Stomach (tissue), 19 donors: ENCODE measurements at regions of chr5 and their contacts with region 1.

Region 1: DNA sequence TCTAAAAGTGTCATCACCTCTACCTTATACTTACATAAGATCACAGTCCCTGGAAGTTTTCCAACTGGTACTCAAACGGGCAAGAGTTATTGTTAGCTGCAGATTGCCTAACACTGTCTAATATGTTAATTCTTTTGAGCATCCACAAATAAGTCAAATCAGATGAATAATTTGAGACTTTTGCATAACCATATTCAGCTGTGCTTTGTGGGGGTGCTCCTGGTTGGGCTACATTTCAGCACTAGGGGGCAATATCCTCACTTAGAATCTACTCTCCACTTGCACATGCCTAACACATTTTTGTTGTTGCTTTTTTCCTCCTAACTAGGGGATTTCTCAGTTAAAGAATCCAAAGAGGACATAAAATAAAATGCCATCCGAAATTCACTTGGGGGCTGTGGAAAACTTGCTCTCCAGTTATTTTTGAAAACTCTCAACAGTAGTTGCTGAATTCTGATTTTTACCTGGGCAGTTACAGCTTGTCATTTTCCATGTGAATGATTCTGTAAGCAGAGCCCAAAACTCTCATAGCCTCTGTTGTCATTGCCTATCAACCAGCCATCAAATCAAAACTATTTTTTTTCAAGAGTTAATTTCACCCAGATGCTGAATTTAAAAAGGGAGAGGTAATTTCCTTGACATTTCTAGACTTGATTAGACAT is 71.5 kb downstream of the TRIM36 start:
- DNase-seq: peak in 1 of 2 donors; percentile 76
- H3K4me3 ChIP-seq: no peak overlapping the region
- H3K27ac ChIP-seq: no peak overlapping the region
- H3K4me1 ChIP-seq: no peaks in the 10 kb centered on the region
- H3K27me3 ChIP-seq: no peaks in the 10 kb centered on the region
- CTCF ChIP-seq: peak in 5 of 7 experiments; percentile 43 to 76 (median 59)
- EP300 ChIP-seq: no peak
- POLR2A ChIP-seq: no peak

Region 2: GRCh38 chr5:114658194-114658593 is 440.0 kb before region 1 on chr5:
- intact Hi-C with region 1: no loop called
- DNase-seq: peak in 1 of 2 donors; percentile 19
- H3K4me3 ChIP-seq: no peak overlapping the region
- H3K27ac ChIP-seq: no peak overlapping the region
- H3K4me1 ChIP-seq: no peaks in the 10 kb centered on the region
- H3K27me3 ChIP-seq: no peaks in the 10 kb centered on the region
- CTCF ChIP-seq: no peak
- EP300 ChIP-seq: no peak
- POLR2A ChIP-seq: no peak

Region 3: GRCh38 chr5:115246361-115246991 is 148.3 kb after region 1 on chr5:
- intact Hi-C with region 1: loop called (anchors 5 kb)
- DNase-seq: peak in 1 of 2 donors; percentile 71
- H3K4me3 ChIP-seq: no peak overlapping the region
- H3K27ac ChIP-seq: no peak overlapping the region
- H3K4me1 ChIP-seq: peaks cover 0 to 45% (median 31%) of the 10 kb centered on the region in 4 donors
- H3K27me3 ChIP-seq: no peaks in the 10 kb centered on the region
- CTCF ChIP-seq: peak in 5 of 7 experiments; percentile 43 to 74 (median 70)
- EP300 ChIP-seq: no peak
- POLR2A ChIP-seq: no peak